Heart left ventricle (tissue), 16 donors: ENCODE measurements at regions of chr21 and their contacts with region 1.

Region 1: GRCh38 chr21:41466024-41466835 is 40.2 kb downstream of the MX1 start:
- DNase-seq: no peak
- ATAC-seq: no peak
- H3K4me3 ChIP-seq: no peak overlapping the region
- H3K27ac ChIP-seq: no peak overlapping the region
- H3K4me1 ChIP-seq: no peaks in the 10 kb centered on the region
- H3K27me3 ChIP-seq: peaks cover 0 to 36% (median 2%) of the 10 kb centered on the region in 9 donors
- CTCF ChIP-seq: no peak
- POLR2A ChIP-seq: no peak

Region 2: GRCh38 chr21:41294539-41295231 is 171.5 kb before region 1 on chr21:
- intact Hi-C with region 1: loop called in 1 of 10 experiments (anchors 5 kb)
- DNase-seq: no peak
- ATAC-seq: no peak
- H3K4me3 ChIP-seq: no peak overlapping the region
- H3K27ac ChIP-seq: no peak overlapping the region
- H3K4me1 ChIP-seq: no peaks in the 10 kb centered on the region
- H3K27me3 ChIP-seq: peaks cover 0 to 49% (median 19%) of the 10 kb centered on the region in 9 donors
- CTCF ChIP-seq: no peak
- POLR2A ChIP-seq: no peak